PC-9 (cell line): ENCODE measurements at regions of chr1 and their contacts with region 1.

Region 1: DNA sequence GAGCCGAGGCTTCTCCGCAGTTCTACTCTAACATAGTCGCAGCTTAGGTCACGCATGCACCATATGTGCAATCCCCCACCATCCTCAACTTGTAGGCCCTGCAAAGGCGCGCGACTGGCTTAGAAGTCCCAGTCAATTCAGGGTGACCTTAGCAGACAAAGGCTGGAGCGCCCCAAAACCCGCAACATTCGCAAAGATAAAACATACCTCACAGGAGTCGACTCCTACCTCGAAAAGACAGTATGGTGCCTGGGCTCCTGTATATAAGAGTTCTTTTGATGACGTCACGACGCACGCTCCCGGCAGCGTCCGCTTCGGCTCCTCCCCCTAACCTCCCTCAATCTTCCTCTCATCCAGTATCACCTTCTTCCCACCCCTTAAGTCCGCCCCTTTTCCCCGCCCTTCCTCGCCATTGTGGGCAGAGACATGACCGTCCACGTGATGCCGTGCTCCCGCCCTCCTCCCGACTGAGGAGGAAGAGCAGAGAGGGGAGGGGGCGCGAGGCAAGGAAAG is at the start of gene GAS5:
- DNase-seq: peak; percentile 97 to 99
- H3K4me3 ChIP-seq: peak within 1 kb of the TSS; percentile 95
- H3K27ac ChIP-seq: peak within 1 kb of the TSS; percentile 91
- H3K4me1 ChIP-seq: peaks cover 37% of the 10 kb centered on the region
- H3K27me3 ChIP-seq: no peaks in the 10 kb centered on the region
- CTCF ChIP-seq: no peak
- total RNA-seq, gene GAS5: 234 and 352 TPM in 2 replicates

Region 2: GRCh38 chr1:173420330-173420806 is 447.4 kb before region 1 on chr1:
- CTCF ChIA-PET with region 1: no interaction called
- POLR2A ChIA-PET with region 1: interaction called, 11 read pairs
- intact Hi-C with region 1: loop called (anchors 1 kb)
- DNase-seq: peak; percentile 61 to 68
- H3K4me3 ChIP-seq: no peak overlapping the region
- H3K27ac ChIP-seq: no peak overlapping the region
- H3K4me1 ChIP-seq: peaks cover 36% of the 10 kb centered on the region
- H3K27me3 ChIP-seq: no peaks in the 10 kb centered on the region
- CTCF ChIP-seq: peak; percentile 95

Region 3: GRCh38 chr1:173714759-173715537 is 152.9 kb before region 1 on chr1 and contains the start of gene KLHL20:
- CTCF ChIA-PET with region 1: no interaction called
- POLR2A ChIA-PET with region 1: interaction called, 3 read pairs
- intact Hi-C with region 1: loop called (anchors 2 kb)
- DNase-seq: peak; percentile 85 to 89
- H3K4me3 ChIP-seq: peak within 1 kb of the TSS; percentile 67
- H3K27ac ChIP-seq: peak within 1 kb of the TSS; percentile 56
- H3K4me1 ChIP-seq: peaks cover 28% of the 10 kb centered on the region
- H3K27me3 ChIP-seq: no peaks in the 10 kb centered on the region
- CTCF ChIP-seq: no peak
- total RNA-seq, gene KLHL20: 11.5 and 15.3 TPM in 2 replicates

Region 4: DNA sequence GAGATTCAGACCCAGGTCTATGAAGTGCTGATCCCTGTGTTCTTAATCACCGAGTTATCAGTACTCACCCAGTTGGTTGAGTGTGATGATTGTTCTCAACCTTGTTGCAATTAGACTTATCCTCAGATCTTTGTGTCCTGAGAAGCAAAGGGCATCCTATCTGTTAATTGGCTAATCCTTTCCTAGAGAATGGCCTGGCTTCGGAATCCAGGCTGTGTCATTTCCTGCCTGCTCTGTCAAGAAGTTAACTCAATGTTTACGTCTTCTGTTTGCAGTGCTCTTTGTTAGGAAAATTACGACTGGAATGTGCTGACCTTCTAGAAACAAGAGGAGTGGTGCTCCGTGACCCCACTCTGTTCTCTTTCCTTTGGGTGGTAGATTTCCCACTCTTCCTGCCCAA is 14.7 kb before region 1 on chr1:
- CTCF ChIA-PET with region 1: no interaction called
- POLR2A ChIA-PET with region 1: no interaction called
- intact Hi-C with region 1: no loop called
- DNase-seq: no peak
- H3K4me3 ChIP-seq: no peak overlapping the region
- H3K27ac ChIP-seq: no peak overlapping the region
- H3K4me1 ChIP-seq: no peaks in the 10 kb centered on the region
- H3K27me3 ChIP-seq: no peaks in the 10 kb centered on the region
- CTCF ChIP-seq: no peak

Region 5: DNA sequence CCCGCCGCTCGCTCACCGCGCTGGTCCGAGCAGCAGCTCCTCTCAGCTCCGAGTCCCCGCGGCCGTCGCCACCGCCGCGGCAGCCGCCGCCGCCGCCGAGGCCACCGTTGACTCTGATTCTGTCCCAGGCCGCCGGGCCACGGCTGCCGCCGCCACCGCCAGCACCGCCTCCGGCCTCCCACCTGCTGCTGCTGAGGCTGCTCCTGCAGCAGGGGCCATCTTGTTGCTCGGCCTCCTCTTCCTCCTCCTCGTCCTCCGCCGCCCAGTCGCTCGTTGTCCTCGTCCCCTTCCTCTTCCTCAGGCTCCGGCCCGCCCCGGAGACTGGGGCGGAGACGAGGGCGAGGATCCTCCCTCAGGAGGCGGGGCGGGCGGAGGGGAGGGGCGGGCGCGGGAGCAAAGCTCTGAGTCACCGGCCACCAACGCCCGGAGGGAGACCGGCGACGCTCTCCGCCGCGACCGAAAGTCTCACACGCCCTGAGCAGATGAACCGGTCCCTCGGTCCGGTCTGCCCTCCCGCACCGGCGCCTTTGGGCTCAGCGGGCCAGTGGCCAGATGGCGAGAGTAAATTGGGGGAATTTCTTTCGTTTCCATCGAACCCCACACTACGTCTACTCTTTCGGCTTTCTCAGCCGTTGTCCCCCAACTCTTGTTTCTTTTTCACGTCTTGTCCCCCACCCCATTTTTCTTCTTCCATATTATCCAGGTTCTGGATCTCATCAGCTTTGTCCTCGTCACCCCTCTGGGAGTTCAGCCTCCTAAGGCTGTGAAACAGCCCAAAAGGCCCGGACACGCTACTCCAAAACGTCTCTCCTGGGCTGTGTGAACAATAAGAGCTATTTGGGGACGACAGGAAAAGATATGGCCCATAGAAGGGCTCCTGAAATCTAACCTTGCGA is 154.5 kb after region 1 on chr1 and contains the start of gene RC3H1:
- CTCF ChIA-PET with region 1: interaction called, 7 read pairs
- POLR2A ChIA-PET with region 1: interaction called, 4 read pairs
- intact Hi-C with region 1: loop called (anchors 2 kb)
- DNase-seq: peak; percentile 80 to 90
- H3K4me3 ChIP-seq: peak within 1 kb of the TSS; percentile 76
- H3K27ac ChIP-seq: peak within 1 kb of the TSS; percentile 93
- H3K4me1 ChIP-seq: peaks cover 41% of the 10 kb centered on the region
- H3K27me3 ChIP-seq: no peaks in the 10 kb centered on the region
- CTCF ChIP-seq: no peak
- total RNA-seq, gene RC3H1: 25.2 and 29.5 TPM in 2 replicates

Region 6: DNA sequence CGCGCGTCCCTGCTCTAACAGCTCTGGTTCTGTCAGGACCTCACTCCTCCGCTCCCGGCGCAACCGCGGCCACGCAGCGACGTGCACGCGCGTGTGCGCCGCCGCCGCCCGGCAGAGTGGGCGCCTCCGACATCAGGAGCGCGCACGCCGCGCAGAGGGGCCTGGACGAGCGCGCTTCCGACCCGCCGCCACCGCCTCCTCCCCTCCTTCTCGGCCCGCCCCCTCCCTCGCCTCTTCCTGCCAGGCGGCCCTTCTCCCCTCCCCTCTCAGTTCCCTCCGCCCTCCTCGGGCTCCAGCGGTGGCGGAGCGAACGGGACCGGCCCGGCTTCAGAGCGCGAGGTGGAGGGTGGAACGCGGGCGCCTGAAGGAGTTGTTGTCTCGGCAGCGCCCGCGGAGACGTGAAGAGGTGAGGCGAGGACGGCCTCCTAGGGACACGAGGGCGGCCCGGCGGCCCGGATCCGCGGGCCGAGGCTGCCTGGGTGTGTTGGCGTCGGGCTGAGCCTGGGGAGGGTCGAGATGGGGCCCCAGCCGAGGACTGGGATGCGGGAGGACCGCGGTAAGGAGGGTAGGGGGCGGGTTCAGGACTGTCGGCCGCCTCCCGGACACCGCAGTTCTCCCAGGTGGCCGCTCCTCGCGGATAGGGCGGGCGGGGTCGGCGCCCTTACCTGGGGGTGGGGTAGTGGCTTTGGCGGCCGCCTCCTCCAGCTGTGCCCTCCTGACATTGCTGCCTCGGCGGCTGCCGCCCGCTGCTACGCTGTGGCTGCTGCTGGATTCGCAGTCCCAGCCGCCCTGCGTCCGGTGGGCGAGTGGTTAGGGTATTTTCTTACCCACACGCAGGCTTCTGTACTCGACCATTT is 291.7 kb after region 1 on chr1 and contains the start of gene RABGAP1L:
- CTCF ChIA-PET with region 1: no interaction called
- POLR2A ChIA-PET with region 1: no interaction called
- intact Hi-C with region 1: loop called (anchors 5 kb)
- DNase-seq: peak; percentile 70 to 92
- H3K4me3 ChIP-seq: peak within 1 kb of the TSS; percentile 81
- H3K27ac ChIP-seq: peak within 1 kb of the TSS; percentile 18; the same call in 1 of the 2 replicates
- H3K4me1 ChIP-seq: peaks cover 17% of the 10 kb centered on the region
- H3K27me3 ChIP-seq: no peaks in the 10 kb centered on the region
- CTCF ChIP-seq: no peak
- total RNA-seq, gene RABGAP1L: 56.7 and 57.4 TPM in 2 replicates